ENCODE measurements at regions of chr2 and their contacts with region 1.

Region 1: GRCh38 chr2:102114290-102114721 is 28.2 kb upstream of the IL1R1 start:
- DNase-seq: peak; percentile 58
- H3K4me3 Mint-ChIP-seq: no peak overlapping the region
- H3K27ac Mint-ChIP-seq: peak overlapping the region; percentile 59
- H3K4me1 Mint-ChIP-seq: peaks cover 73% of the 10 kb centered on the region
- H3K27me3 Mint-ChIP-seq: peaks cover 12% of the 10 kb centered on the region

Region 2: GRCh38 chr2:101410716-101411211 is 703.5 kb before region 1 on chr2:
- CTCF ChIA-PET with region 1: no interaction called
- POLR2A ChIA-PET with region 1: no interaction called
- intact Hi-C with region 1: no loop called
- DNase-seq: no peak
- H3K4me3 Mint-ChIP-seq: no peak overlapping the region
- H3K27ac Mint-ChIP-seq: no peak overlapping the region
- H3K4me1 Mint-ChIP-seq: no peaks in the 10 kb centered on the region
- H3K27me3 Mint-ChIP-seq: no peaks in the 10 kb centered on the region

Region 3: GRCh38 chr2:102005989-102006885 is 108.1 kb before region 1 on chr2:
- CTCF ChIA-PET with region 1: interaction called, 3 read pairs
- POLR2A ChIA-PET with region 1: interaction called, 6 read pairs
- intact Hi-C with region 1: loop called (anchors 2 kb)
- DNase-seq: peak; percentile 51
- H3K4me3 Mint-ChIP-seq: peak overlapping the region; percentile 33
- H3K27ac Mint-ChIP-seq: no peak overlapping the region
- H3K4me1 Mint-ChIP-seq: peaks cover 21% of the 10 kb centered on the region
- H3K27me3 Mint-ChIP-seq: peaks cover 1% of the 10 kb centered on the region

Region 4: GRCh38 chr2:102103992-102104871 is 10.1 kb before region 1 on chr2:
- CTCF ChIA-PET with region 1: no interaction called
- POLR2A ChIA-PET with region 1: interaction called, 6 read pairs
- intact Hi-C with region 1: loop called (anchors 1 kb)
- DNase-seq: peak; percentile 92
- H3K4me3 Mint-ChIP-seq: peak overlapping the region; percentile 81
- H3K27ac Mint-ChIP-seq: peak overlapping the region; percentile 86
- H3K4me1 Mint-ChIP-seq: peaks cover 50% of the 10 kb centered on the region
- H3K27me3 Mint-ChIP-seq: peaks cover 12% of the 10 kb centered on the region

Region 5: DNA sequence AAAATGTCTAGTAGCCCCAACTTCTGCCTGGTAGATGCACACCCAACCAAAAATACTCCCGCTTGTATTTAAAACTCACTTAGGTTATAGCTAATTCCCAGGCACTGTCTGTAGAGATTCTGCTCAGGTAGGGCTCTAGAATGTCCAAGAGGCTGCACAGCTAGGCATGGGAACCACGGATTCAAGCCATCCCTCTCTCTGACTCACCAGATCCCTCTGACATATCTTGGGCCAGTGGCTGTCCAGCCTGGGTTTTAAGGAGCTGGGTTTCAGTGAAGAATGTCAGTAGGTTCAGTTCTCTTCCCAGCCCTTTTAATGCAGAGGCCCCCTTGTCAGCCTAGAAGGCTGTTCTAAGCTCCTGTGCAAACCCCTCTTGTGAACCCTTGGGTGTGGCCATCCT is 12.3 kb after region 1 on chr2:
- CTCF ChIA-PET with region 1: interaction called, 6 read pairs
- POLR2A ChIA-PET with region 1: interaction called, 6 read pairs
- intact Hi-C with region 1: loop called (anchors 2 kb)
- DNase-seq: no peak
- H3K4me3 Mint-ChIP-seq: no peak overlapping the region
- H3K27ac Mint-ChIP-seq: peak overlapping the region; percentile 90
- H3K4me1 Mint-ChIP-seq: peaks cover 38% of the 10 kb centered on the region
- H3K27me3 Mint-ChIP-seq: peaks cover 12% of the 10 kb centered on the region

Region 6: DNA sequence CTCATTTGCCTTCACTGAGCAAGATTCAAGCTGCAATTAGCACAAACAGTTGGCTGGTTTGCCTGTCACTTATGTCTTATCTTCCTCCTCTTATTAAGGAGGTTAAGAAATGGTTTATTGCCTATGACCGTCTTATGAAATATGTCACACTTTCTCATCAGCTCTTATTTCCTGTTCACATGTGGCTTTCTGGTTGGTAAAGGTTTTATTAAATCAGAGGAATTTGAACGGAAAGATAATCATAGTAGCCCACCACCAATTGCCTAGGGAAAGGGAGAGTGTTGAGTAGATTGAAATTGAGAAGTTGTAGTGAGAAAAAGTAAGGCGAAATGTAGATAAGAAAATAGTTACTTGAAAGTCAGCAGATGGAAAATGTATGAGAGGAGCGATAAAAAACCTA is 24.0 kb after region 1 on chr2:
- CTCF ChIA-PET with region 1: interaction called, 3 read pairs
- POLR2A ChIA-PET with region 1: interaction called, 10 read pairs
- intact Hi-C with region 1: loop called (anchors 1 kb)
- DNase-seq: no peak
- H3K4me3 Mint-ChIP-seq: no peak overlapping the region
- H3K27ac Mint-ChIP-seq: peak overlapping the region; percentile 70
- H3K4me1 Mint-ChIP-seq: peaks cover 59% of the 10 kb centered on the region
- H3K27me3 Mint-ChIP-seq: peaks cover 24% of the 10 kb centered on the region

Measured in activated CD4-positive, alpha-beta memory T cell treated with anti-CD3 and anti-CD28 coated beads for 36 hours (primary cell).